Aorta (tissue), 5 donors: ENCODE measurements at regions of chr3 and their contacts with region 1.

Region 1: DNA sequence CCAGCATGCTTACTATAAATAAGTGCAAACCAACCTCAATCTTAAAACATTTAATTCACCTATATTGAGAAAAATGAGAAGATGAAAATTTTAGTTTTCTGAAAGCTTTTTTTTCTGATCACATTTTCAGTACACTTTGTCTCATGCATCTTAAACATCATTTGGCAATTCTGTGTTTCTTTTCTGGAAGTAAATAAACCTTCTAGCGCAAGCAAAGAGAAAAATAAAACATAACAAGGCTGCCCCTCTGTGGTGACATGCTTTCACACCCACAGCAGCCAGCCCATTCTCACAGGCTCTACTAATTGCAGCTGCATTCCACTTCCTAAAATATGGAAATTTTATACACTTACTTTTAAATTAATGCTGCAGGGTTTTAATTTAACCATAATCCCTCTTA is 90.1 kb downstream of the NEK10 start:
- DNase-seq: no peak
- ATAC-seq: no peak
- H3K4me3 ChIP-seq: no peak overlapping the region
- H3K27ac ChIP-seq: no peak overlapping the region
- H3K4me1 ChIP-seq: peaks cover 0 to 2% of the 10 kb centered on the region in 2 donors
- H3K27me3 ChIP-seq: no peaks in the 10 kb centered on the region

Region 2: DNA sequence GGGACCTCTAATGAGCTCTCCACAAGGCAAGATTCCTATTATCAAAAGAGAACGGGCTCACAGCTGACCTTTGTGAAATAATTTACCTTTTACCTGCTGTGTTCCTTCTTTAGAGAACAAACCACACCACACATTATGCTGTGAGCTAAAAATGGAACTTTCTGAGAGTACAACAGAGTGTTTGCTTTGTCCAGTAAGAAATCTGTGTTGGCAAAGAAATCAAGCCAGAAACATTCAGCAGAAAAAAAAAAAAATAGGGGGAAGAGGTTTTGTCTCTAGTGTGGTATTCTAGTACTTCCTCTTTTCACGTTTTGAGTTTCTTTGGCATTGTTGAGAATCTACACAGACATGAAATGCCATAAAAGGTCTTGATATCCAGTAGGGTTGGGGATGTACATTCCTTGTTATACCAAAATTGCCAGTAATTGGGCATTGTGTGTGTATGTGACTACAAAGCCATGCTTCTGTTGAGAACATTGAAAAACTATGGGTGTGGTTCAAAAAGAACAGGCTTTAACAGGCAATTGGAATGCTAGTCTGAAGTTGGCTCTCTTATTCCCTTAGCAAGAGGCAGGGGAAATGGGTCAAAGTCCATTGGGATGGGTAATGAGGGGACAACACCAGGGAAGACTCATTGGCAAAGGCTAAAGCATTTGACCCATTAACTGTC is 183.4 kb before region 1 on chr3:
- intact Hi-C with region 1: no loop called
- DNase-seq: no peak
- ATAC-seq: no peak
- H3K4me3 ChIP-seq: no peak overlapping the region
- H3K27ac ChIP-seq: peak overlapping the region in 1 of 2 donors; percentile 43
- H3K4me1 ChIP-seq: peaks cover 4 to 9% of the 10 kb centered on the region in 2 donors
- H3K27me3 ChIP-seq: no peaks in the 10 kb centered on the region

Region 3: DNA sequence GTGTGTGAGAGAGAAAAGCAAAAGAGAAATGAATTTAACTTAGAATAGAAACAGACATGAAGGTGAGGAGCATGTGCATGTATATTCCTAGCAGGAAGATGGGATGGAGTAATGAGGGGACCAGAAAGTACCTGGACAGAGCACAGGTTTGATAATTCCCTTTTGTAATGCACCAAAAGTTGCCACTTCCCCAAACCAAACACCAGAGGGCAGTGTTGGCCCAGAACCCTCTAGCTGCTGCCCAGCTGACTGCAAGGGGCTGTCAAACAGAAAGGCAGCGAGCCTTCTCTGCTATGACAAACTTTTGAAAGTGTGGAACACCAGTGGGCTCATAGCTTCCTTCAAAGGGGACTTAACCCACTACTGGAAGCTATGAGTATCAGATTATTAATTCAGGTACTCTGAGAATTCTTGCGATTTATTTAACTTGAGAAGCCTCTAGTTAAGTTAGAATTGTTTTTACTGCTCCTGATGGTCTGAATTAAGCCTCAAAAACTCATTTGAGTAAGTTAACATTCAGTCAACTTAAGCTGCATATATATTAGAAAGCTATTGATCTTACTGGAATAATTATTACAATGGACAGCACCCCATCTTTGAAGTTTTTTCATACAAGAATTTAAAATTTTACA is 144.8 kb before region 1 on chr3:
- intact Hi-C with region 1: loop called (anchors 5 kb)
- DNase-seq: peak; percentile 64 to 78
- ATAC-seq: peak; percentile 88
- H3K4me3 ChIP-seq: no peak overlapping the region
- H3K27ac ChIP-seq: no peak overlapping the region
- H3K4me1 ChIP-seq: peaks cover 2 to 5% of the 10 kb centered on the region in 2 donors
- H3K27me3 ChIP-seq: no peaks in the 10 kb centered on the region

Region 4: DNA sequence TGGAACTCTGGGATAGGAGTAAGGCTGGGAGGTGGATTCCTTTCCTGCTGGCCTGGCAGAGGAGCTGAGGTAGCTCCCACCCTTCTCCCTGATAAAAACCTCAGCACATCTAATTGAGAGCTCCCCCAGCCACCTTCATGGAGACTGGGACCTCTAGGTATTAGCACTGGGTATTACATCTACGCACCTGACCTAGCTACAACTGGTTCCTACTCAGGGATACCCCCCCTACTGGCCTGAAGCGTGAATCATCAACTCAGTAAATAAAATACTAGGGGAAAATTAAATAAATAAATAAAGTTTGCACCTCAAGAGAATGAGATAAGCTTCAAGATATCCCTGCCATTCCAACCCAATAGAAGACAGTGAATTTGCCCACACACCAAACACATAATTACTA is 50.3 kb before region 1 on chr3:
- intact Hi-C with region 1: loop called in 1 of 2 experiments (anchors 2 kb)
- DNase-seq: no peak
- ATAC-seq: no peak
- H3K4me3 ChIP-seq: no peak overlapping the region
- H3K27ac ChIP-seq: no peak overlapping the region
- H3K4me1 ChIP-seq: no peaks in the 10 kb centered on the region
- H3K27me3 ChIP-seq: no peaks in the 10 kb centered on the region

Region 5: GRCh38 chr3:27319847-27320526 is 40.9 kb after region 1 on chr3:
- intact Hi-C with region 1: no loop called
- DNase-seq: no peak
- ATAC-seq: peak; percentile 78
- H3K4me3 ChIP-seq: no peak overlapping the region
- H3K27ac ChIP-seq: no peak overlapping the region
- H3K4me1 ChIP-seq: peaks cover 3% of the 10 kb centered on the region in 2 donors
- H3K27me3 ChIP-seq: no peaks in the 10 kb centered on the region